ENCODE measurements at regions of chr6 and their contacts with region 1.

Region 1: DNA sequence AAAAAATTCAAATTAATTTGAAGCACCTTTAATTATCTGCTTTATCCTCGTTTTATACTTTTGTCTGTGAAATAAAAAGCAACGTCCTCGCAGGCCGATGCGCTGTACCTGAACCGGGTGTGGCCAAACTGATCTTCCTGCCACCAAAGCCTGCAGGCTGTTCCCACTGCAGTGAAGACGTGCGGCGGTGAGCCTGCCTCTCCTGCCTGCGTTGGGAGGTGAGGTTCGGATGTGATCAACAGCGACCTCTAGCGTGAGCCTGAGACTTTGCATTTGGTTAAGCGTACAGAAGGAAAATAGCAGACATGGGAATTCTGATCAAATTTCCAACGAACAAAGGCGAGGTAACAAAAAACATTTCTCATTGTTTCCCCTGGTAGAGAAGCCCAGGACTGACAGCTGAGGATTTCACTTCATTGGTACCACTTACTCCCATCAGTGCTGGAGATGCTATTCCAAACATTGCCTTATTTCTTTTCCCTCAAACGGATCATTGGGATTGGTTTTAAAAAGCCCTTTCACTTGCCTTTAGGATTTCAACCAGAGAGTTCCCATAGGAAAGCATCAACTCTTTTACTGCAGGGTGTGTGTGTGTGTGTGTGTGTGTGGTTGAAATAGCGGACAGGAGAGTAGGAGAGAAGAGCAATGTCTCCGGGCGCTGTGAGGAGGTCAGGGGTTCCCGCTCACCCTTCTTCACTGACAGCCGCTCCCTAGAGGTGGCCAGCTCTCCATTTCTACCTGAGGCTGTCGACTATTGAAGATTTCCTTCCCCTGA is 56.6 kb upstream of the CCN6 start:
- DNase-seq: peak; percentile 80 to 91 (median 85)
- ATAC-seq: peak; percentile 70 to 94 (median 92)
- H3K4me3 ChIP-seq: peak overlapping the region in 10 of 12 donors; percentile 1 to 42 (median 23)
- H3K27ac ChIP-seq: peak overlapping the region in 7 of 12 donors; percentile 22 to 57 (median 45)
- H3K4me1 ChIP-seq: peaks cover 0 to 12% (median 4%) of the 10 kb centered on the region in 12 donors
- H3K27me3 ChIP-seq: no peaks in the 10 kb centered on the region
- CTCF ChIP-seq: peak; percentile 81 to 94 (median 91)
- POLR2A ChIP-seq: no peak

Region 2: DNA sequence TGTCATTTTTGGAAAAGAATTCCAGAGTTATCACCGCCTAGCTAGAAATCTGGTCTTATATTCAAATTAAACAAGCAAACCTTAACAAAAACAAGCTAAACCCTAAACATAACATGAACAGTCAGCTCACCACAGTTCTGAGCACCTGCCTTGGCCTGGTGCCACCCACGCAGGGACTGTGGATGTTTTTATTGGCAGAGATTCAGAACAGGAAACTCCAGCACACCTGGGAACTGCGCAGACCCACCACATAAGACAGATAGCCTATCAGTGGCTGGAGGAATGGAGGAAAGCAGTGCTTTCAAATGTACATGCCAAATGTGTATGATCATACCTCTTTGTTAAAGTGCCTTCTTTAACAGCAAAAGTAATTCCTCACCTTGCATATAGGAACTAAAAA is 901.0 kb before region 1 on chr6:
- intact Hi-C with region 1: no loop called
- DNase-seq: no peak
- ATAC-seq: no peak
- H3K4me3 ChIP-seq: no peak overlapping the region
- H3K27ac ChIP-seq: no peak overlapping the region
- H3K4me1 ChIP-seq: peaks cover 0 to 3% (median 0%) of the 10 kb centered on the region in 12 donors
- H3K27me3 ChIP-seq: no peaks in the 10 kb centered on the region
- CTCF ChIP-seq: no peak
- POLR2A ChIP-seq: no peak

Region 3: DNA sequence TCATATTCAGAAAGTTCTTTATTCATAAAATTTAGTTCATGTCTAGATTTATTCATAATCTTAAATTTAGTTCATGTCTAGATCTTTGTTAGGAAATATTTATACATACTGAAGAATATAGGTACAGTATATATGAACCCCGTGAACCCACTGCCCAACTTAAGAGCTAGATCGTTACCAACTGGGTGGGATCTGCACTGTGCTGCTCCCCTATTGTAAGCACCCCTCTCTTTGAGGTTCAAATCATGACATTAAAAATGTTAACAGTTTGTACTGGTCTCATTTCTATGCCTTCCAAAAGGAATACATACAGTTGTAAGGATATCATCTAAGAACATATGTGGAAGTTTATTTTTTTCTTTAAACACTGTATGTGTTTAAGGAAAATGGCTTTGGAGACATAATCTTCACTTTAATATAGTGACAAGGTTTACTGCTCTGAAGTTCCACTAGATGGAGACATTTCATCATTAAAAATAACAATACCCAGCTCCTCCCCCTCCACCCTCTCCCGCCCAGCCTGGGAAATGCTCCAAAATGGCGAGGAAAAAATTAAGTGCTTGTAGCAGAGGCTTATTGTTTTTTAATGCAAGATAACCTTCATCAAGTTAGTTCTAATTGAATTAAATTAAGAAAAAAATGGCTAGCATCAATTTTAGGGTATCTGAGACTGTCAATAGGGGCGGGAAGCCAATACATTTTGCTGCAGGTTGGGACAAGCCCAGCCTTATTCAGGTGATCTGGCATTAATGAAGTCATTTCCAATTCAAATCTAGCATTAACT is 287.5 kb before region 1 on chr6:
- intact Hi-C with region 1: loop called (anchors 1 to 2 kb)
- DNase-seq: peak; percentile 59 to 83 (median 66)
- ATAC-seq: peak; percentile 56 to 79 (median 75)
- H3K4me3 ChIP-seq: peak overlapping the region in 4 of 12 donors; percentile 13 to 29 (median 16)
- H3K27ac ChIP-seq: peak overlapping the region in 11 of 12 donors; percentile 22 to 66 (median 48)
- H3K4me1 ChIP-seq: peaks cover 3 to 45% (median 31%) of the 10 kb centered on the region in 12 donors
- H3K27me3 ChIP-seq: no peaks in the 10 kb centered on the region
- CTCF ChIP-seq: peak; percentile 66 to 88 (median 78)
- POLR2A ChIP-seq: no peak

Region 4: DNA sequence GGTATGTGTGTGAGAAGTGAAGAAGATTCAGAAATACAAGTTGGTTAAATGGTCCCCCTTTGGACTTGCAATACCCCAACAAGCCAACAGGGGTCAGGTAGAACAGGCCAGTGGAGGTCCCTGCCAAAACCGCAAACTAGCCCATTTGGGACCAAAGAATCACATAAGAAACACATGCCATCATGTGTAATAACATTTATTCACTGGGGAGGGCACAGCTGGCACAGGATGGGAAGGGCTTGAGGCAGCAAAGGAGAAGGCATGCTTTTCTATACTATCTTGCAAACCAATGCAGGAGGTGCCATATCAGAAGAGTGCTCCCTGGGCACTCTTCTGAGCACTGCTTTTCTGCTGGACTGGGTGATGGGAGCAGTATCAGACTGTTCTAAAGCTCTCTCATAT is 275.5 kb before region 1 on chr6:
- intact Hi-C with region 1: loop called in 1 of 10 experiments (anchors 5 kb)
- DNase-seq: peak in 1 of 5 donors; percentile 35
- ATAC-seq: peak in 3 of 4 donors; percentile 11 to 39 (median 21)
- H3K4me3 ChIP-seq: no peak overlapping the region
- H3K27ac ChIP-seq: peak overlapping the region in 5 of 12 donors; percentile 8 to 60 (median 16)
- H3K4me1 ChIP-seq: peaks cover 0 to 54% (median 32%) of the 10 kb centered on the region in 12 donors
- H3K27me3 ChIP-seq: no peaks in the 10 kb centered on the region
- CTCF ChIP-seq: peak in 11 of 12 donors; percentile 18 to 50 (median 41)
- POLR2A ChIP-seq: no peak

Region 5: DNA sequence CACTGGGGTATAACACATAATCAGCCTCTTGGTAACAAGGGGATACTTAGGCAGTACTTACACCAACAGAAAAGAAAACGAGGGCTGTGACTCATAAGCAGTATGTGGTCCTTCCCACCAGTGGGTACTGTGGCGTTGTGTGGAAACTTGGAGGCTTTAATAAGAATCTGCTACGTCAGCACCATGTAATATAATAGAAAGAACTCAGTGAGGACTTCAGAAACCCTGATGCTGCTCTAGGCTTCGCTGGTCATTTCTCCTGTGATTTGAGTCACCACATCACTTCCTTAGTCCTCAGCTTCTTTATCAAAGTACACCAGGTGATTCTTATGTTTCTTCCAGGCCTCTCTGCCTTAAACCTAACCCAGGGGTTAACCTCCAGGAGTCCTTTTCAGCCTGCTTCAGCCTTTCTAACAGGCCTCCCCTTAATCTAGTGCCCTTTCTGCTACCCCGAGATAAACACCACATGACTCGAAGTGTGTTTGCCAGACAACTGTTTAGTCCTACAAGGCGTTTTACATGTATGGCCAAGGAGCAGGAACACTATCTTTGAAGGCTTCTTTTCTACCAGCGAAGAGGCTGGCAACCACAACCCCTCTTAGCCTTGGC is 192.5 kb before region 1 on chr6:
- intact Hi-C with region 1: loop called in 2 of 10 experiments (anchors 10 kb)
- DNase-seq: no peak
- ATAC-seq: peak; percentile 57 to 75 (median 68)
- H3K4me3 ChIP-seq: no peak overlapping the region
- H3K27ac ChIP-seq: peak overlapping the region in 10 of 12 donors; percentile 13 to 84 (median 44)
- H3K4me1 ChIP-seq: peaks cover 2 to 67% (median 37%) of the 10 kb centered on the region in 12 donors
- H3K27me3 ChIP-seq: no peaks in the 10 kb centered on the region
- CTCF ChIP-seq: peak in 4 of 12 donors; percentile 6 to 28 (median 14)
- POLR2A ChIP-seq: no peak

Region 6: DNA sequence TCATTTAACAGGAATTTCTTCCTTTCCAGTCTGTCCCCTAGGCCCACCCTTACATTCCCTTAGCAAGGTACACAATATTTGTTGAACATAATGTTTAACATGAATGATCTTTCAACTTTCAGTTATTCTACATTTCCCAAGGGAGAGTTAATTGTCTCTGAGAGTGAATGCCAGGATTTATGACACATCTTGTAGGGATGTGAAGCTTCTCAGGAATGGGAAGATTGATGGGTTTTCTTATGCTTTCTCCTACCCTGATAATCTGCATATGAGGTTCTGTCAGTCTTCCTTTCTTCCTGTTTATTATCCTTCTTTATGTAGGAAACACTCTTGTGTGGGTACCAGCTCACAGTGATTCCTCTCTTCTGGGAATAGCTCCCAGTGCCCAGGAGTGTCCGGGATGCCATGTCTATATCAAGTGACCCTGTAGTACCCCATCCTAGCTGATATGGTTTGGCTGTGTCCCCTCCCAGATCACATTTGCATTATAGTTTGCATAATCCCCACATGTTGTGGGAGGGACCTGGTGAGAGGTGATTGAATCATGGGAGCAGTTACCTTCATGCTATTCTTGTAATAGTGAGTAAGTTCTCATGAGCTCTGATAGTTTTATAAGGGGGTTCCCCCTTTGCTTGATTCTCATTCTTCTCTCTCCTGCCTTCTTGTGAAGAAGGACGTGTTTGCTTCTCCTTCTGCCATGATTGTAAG is 116.9 kb before region 1 on chr6:
- intact Hi-C with region 1: loop called in 4 of 10 experiments (anchors 5 to 10 kb)
- DNase-seq: no peak
- ATAC-seq: no peak
- H3K4me3 ChIP-seq: no peak overlapping the region
- H3K27ac ChIP-seq: no peak overlapping the region
- H3K4me1 ChIP-seq: no peaks in the 10 kb centered on the region
- H3K27me3 ChIP-seq: no peaks in the 10 kb centered on the region
- CTCF ChIP-seq: no peak
- POLR2A ChIP-seq: no peak

Region 7: DNA sequence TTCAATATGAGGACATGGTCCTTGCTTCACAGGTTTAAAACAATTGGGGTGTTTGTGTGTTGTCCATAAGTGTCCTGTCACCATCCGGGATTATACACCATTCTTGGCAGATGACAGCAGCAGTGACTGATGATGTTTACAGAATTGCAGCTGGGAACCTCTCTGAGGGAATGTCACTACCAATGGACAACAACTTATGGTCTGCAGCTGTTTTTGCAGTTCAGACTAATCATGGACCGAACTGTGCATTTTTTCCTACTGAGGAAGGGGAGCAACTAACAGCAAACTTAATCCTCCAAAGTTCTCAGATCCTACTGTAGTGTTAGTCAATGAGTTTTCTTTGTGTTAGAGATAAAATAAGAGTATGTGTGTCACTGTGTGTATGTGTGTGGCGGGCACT is 116.2 kb after region 1 on chr6:
- intact Hi-C with region 1: no loop called
- DNase-seq: no peak
- ATAC-seq: peak in 1 of 4 donors; percentile 62
- H3K4me3 ChIP-seq: no peak overlapping the region
- H3K27ac ChIP-seq: peak overlapping the region in 5 of 12 donors; percentile 3 to 15 (median 14)
- H3K4me1 ChIP-seq: peaks cover 0 to 31% (median 5%) of the 10 kb centered on the region in 12 donors
- H3K27me3 ChIP-seq: no peaks in the 10 kb centered on the region
- CTCF ChIP-seq: no peak
- POLR2A ChIP-seq: no peak